B cell (primary cell): ENCODE measurements at regions of chr2 and their contacts with region 1.

Region 1: GRCh38 chr2:108448678-108449493 is at the start of gene GCC2:
- DNase-seq: peak; percentile 98
- ATAC-seq: peak; percentile 96
- H3K4me3 ChIP-seq: peak within 1 kb of the TSS; percentile 87 to 99 (median 95)
- H3K4me3 Mint-ChIP-seq: peak within 1 kb of the TSS; percentile 100
- H3K27ac ChIP-seq: peak within 1 kb of the TSS; percentile 94 to 98
- H3K27ac Mint-ChIP-seq: peak within 1 kb of the TSS; percentile 98
- H3K4me1 ChIP-seq: peaks cover 19 to 20% of the 10 kb centered on the region in 2 donors
- H3K4me1 Mint-ChIP-seq: peaks cover 43% of the 10 kb centered on the region
- H3K27me3 ChIP-seq: no peaks in the 10 kb centered on the region
- H3K27me3 Mint-ChIP-seq: no peaks in the 10 kb centered on the region
- CTCF ChIP-seq: no peak
- total RNA-seq, gene GCC2: 87.9 and 97.3 TPM in 2 replicates

Region 2: GRCh38 chr2:108786354-108787199 is 337.7 kb after region 1 on chr2 and contains the start of gene CCDC138:
- CTCF ChIA-PET with region 1: no interaction called
- POLR2A ChIA-PET with region 1: no interaction called
- intact Hi-C with region 1: loop called (anchors 2 kb)
- DNase-seq: peak; percentile 92
- ATAC-seq: peak; percentile 97
- H3K4me3 ChIP-seq: peak within 1 kb of the TSS; percentile 61 to 88 (median 70)
- H3K4me3 Mint-ChIP-seq: peak within 1 kb of the TSS; percentile 99
- H3K27ac ChIP-seq: peak within 1 kb of the TSS; percentile 69 to 86
- H3K27ac Mint-ChIP-seq: peak within 1 kb of the TSS; percentile 91
- H3K4me1 ChIP-seq: peaks cover 6 to 7% of the 10 kb centered on the region in 2 donors
- H3K4me1 Mint-ChIP-seq: peaks cover 12% of the 10 kb centered on the region
- H3K27me3 ChIP-seq: no peaks in the 10 kb centered on the region
- H3K27me3 Mint-ChIP-seq: no peaks in the 10 kb centered on the region
- CTCF ChIP-seq: no peak
- total RNA-seq, gene CCDC138: 11.4 and 16.3 TPM in 2 replicates